Activated CD4-positive, alpha-beta T cell treated with anti-CD3 and anti-CD28 coated beads, Interleukin-2, amount 10 ng/mL, durations not matched to agents 24 days and 14 days (primary cell): ENCODE measurements at regions of chr19 and their contacts with region 1.

Region 1: GRCh38 chr19:46513461-46514236 is 18.0 kb upstream of the PNMA8B start:
- DNase-seq: peak; percentile 94
- H3K4me3 Mint-ChIP-seq: no peak overlapping the region
- H3K27ac Mint-ChIP-seq: no peak overlapping the region
- H3K4me1 Mint-ChIP-seq: peaks cover 22% of the 10 kb centered on the region
- H3K27me3 Mint-ChIP-seq: peaks cover 26% of the 10 kb centered on the region

Region 2: DNA sequence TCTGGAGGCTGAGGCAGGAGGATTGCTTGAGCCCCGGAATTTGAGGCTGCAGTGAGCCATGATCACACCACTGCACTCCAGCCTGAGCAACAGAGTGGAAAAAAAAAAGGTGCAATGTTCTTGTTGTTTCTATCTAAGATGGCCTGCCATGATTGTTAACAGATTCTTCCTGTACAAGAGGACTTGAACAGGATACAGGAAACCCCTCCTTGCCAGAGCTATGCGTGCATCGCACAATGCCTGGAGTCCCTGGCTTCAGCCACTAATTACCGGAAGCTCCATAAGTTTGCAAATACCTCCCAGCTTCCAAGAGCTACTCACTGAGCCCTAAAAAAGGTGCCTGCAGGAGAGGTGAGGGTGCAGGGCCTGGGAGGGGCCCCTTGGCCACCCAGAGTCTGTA is 229.9 kb before region 1 on chr19:
- intact Hi-C with region 1: loop called (anchors 5 kb)
- DNase-seq: no peak
- H3K4me3 Mint-ChIP-seq: no peak overlapping the region
- H3K27ac Mint-ChIP-seq: no peak overlapping the region
- H3K4me1 Mint-ChIP-seq: no peaks in the 10 kb centered on the region
- H3K27me3 Mint-ChIP-seq: peaks cover 7% of the 10 kb centered on the region

Region 3: DNA sequence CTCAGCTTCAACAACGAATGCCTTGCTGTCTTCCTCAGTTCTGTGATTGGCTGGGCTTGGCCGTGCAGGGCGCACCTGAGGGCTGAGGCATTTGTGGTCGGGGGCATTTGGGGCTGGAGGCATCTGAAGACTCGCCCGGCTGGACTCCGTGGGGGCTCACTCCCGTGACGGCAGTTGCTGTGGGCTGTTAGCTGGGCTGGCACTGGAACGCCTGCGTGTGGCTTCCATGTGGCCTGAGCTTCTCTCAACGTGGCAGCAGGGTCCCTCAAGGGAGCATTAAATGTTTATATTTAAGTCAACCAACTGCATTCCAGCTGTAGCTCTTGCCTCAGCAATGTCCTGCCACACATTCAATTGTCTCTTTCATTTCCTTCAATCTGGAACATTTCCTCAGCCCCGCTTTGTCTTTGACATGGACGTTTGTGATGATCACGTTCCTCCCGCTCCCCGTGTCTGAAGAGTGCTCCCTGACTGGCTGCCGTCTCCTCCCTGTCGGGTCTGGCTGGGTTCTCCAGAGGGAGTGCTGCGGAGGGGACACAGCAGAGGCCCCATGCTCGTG is 121.3 kb before region 1 on chr19:
- intact Hi-C with region 1: loop called (anchors 2 kb)
- DNase-seq: no peak
- H3K4me3 Mint-ChIP-seq: no peak overlapping the region
- H3K27ac Mint-ChIP-seq: peak overlapping the region; percentile 1
- H3K4me1 Mint-ChIP-seq: peaks cover 2% of the 10 kb centered on the region
- H3K27me3 Mint-ChIP-seq: peaks cover under 1% of the 10 kb centered on the region

Region 4: GRCh38 chr19:46404055-46404752 is 109.4 kb before region 1 on chr19:
- intact Hi-C with region 1: loop called (anchors 1 kb)
- DNase-seq: no peak
- H3K4me3 Mint-ChIP-seq: peak overlapping the region; percentile 37
- H3K27ac Mint-ChIP-seq: no peak overlapping the region
- H3K4me1 Mint-ChIP-seq: peaks cover 12% of the 10 kb centered on the region
- H3K27me3 Mint-ChIP-seq: peaks cover 58% of the 10 kb centered on the region

Region 5: DNA sequence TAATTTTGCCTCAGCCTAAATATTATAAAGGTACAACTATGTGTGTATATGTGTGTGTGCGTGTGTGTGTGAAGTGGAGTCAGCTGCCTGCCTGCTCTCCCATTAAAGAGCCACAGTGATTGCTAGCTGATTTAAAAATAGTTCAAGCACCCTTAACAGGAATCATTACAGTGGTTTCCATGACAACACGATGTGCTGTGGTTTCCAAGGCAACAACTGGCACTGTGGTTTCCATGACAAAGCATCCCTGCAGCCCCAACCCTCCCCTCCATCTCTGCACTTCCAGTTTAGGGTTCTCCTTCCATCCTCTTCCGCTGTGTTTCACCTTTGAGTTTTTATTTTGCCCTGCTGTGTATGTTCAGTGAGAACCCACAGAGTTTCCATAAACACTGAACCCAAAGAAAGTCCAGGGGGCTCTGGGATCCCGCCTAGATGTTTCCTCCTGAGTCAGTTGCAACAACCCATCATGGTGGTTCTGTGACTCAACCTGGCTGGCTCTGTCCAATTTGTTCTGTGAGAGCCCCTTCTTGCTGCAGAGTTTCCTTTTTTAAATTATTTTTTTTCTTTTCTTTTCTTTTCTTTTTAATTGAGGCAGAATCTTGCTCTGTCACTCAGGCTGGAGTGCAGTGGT is 35.2 kb before region 1 on chr19:
- intact Hi-C with region 1: no loop called
- DNase-seq: peak; percentile 67
- H3K4me3 Mint-ChIP-seq: no peak overlapping the region
- H3K27ac Mint-ChIP-seq: no peak overlapping the region
- H3K4me1 Mint-ChIP-seq: peaks cover 2% of the 10 kb centered on the region
- H3K27me3 Mint-ChIP-seq: peaks cover 28% of the 10 kb centered on the region

Region 6: GRCh38 chr19:46542428-46543230 is 29.0 kb after region 1 on chr19:
- intact Hi-C with region 1: loop called (anchors 1 kb)
- DNase-seq: peak; percentile 92
- H3K4me3 Mint-ChIP-seq: no peak overlapping the region
- H3K27ac Mint-ChIP-seq: no peak overlapping the region
- H3K4me1 Mint-ChIP-seq: peaks cover 6% of the 10 kb centered on the region
- H3K27me3 Mint-ChIP-seq: peaks cover 9% of the 10 kb centered on the region